Activated T-helper 1 cell treated with anti-CD3 and anti-CD28 coated beads, Interleukin-12 subunit alpha, Interleukin-12 subunit beta, Interleukin-2, Interleukin-4 antibody, amounts not matched to agents 30 ng/mL and 10 ng/mL and 1 ng/mL, durations not matched to agents 14 hours and 24 hours and 36 hours (primary cell): ENCODE measurements at regions of chr12 and their contacts with region 1.

Region 1: DNA sequence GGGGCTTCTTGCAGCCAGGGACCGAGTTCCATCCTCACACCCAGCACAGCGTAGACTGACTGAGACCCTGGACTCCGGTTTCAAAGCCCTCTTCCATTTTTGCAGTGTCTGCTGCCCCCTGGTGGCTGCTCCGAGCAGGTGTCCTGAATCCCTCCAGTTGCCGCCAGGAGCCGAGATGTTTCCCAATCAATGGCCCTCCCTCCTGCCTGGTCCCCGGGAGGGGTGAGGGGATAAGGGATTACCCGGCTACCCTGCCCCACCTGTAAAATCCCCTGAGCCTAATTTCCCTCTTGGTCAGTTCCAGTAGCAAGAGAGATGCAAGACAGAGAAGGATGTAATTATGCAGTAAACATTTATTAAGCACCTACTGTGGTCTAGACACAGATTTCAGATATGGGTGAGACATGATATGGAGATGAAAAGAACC is 55.0 kb downstream of the PHETA1 start:
- DNase-seq: peak; percentile 37
- H3K4me3 Mint-ChIP-seq: no peak overlapping the region
- H3K27ac Mint-ChIP-seq: peak overlapping the region; percentile 58
- H3K4me1 Mint-ChIP-seq: peaks cover 7% of the 10 kb centered on the region
- H3K27me3 Mint-ChIP-seq: peaks cover 6% of the 10 kb centered on the region

Region 2: GRCh38 chr12:110893956-110894355 is 419.9 kb before region 1 on chr12:
- intact Hi-C with region 1: loop called (anchors 1 kb)
- DNase-seq: no peak
- H3K4me3 Mint-ChIP-seq: no peak overlapping the region
- H3K27ac Mint-ChIP-seq: no peak overlapping the region
- H3K4me1 Mint-ChIP-seq: no peaks in the 10 kb centered on the region
- H3K27me3 Mint-ChIP-seq: peaks cover 24% of the 10 kb centered on the region

Region 3: GRCh38 chr12:111268738-111269572 is 44.9 kb before region 1 on chr12:
- intact Hi-C with region 1: loop called (anchors 1 kb)
- DNase-seq: no peak
- H3K4me3 Mint-ChIP-seq: no peak overlapping the region
- H3K27ac Mint-ChIP-seq: no peak overlapping the region
- H3K4me1 Mint-ChIP-seq: no peaks in the 10 kb centered on the region
- H3K27me3 Mint-ChIP-seq: no peaks in the 10 kb centered on the region